ENCODE measurements at regions of chr7 and their contacts with region 1.

Region 1: DNA sequence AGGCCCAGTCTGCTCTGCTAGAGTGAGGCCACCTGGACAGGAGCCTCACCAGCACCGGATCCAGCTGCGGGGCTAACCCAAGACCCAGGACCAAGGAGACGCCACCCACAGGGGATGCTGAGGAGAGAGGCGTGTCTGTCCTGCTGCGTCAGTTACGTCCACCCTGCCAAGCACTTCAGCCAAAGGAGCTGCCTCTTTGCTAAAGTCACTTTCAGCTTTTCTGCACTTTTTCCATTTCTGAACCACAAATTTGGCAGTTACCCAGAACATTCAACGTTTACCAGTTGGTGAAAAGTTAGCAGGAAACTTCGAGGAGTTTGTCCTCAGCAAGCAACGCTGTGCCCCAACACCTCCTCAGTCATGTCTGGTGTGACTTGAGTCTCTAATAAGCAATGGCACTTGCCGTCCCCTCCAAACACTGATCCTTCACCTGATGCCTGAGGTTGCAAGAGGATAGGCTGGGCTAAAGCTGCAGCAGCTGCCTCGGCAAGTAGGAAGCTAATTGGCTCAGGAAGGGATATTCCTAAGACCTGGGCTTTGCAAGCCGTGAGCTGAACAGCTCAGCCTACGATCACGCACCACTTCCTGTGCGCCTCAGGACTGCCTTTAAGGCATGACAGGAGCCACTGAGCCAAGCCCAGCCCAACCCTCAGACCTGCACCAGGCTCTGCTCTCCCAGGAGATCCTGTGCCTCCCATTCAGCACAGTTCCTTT is 40.1 kb downstream of the KCNH2 start:
- DNase-seq: no peak
- H3K4me3 ChIP-seq: peak overlapping the region in 1 of 3 donors; percentile 8
- H3K27ac ChIP-seq: no peak overlapping the region
- H3K4me1 ChIP-seq: peaks cover 0 to 4% of the 10 kb centered on the region in 2 donors
- H3K27me3 ChIP-seq: no peaks in the 10 kb centered on the region
- CTCF ChIP-seq: no peak
- POLR2A ChIP-seq: no peak

Region 2: DNA sequence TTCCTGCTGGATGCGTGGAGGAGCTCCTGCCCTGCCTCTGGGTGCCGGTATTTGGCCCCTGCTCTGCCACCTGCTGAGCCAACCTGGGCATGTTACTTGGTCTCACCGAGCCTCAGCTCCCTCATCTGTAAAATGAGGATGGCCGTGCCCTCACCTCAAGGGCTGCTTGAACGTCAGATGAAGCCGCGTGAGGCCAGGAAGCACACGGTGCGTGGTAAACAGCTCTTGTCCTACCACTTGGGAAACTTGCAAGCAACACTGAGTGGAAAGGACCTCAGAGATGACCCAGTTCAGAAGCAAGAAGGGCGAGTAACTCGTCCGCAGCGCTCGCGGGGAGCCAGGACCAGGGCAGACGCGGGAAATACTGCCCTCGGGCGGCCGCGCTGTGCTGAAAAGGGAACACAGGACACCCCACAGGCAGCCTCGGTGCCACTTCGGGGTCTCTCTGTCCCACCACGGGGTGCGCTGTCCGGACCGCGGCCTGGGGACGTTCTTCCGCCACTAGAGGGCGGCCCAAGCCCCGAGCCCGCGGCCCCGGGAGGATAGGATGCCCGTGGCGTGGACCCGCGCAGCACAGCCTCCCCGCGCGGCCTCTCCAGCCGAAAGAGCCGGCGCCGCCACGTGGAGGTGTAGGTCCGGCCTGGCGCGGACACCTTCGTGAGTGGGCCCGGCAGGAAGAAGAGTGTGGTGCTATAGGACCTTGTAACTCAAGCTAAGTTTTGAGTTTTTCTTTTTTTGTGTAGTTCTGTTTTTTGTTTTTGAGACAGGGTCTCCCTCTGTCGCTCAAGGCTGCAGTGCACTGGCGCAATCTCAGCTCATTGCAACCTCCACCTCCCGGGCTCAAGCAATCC is 844.8 kb after region 1 on chr7:
- intact Hi-C with region 1: loop called (anchors 5 kb)
- DNase-seq: peak; percentile 47 to 63
- H3K4me3 ChIP-seq: peak overlapping the region in 2 of 3 donors; percentile 30 to 59
- H3K27ac ChIP-seq: peak overlapping the region; percentile 50 to 64
- H3K4me1 ChIP-seq: no peaks in the 10 kb centered on the region
- H3K27me3 ChIP-seq: no peaks in the 10 kb centered on the region
- CTCF ChIP-seq: peak; percentile 78 to 93 (median 88)
- POLR2A ChIP-seq: no peak

Region 3: DNA sequence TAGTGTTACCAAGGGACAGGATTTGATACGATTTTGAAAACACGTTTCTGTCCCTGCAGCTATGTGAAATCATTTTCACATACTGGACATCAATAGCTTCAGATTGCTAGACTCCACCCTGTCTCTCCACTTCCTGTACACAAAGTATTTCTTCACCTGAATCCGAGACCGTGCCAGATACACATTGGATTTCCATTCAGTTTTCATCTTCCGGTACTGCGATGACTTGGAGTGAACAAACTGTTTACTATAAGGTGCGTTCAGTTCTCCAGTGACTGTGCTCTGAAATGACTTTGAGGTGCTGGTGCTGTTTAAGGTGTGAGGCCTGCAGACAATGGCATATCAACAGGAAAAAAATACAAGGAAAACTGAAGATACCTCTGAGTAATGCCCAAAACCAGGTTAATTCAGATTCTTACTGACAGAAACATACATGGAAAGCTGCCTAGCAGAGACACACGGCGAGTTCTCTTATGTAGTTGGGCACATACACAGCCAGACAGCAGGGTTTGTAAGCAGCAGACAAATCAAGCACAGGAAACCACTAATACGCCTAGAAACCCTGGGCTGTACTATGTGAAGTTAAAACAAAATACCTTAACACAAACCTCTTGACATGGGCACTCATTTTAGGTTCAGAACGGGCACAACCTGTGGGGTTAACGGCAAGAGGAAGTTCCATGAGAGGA is 1206.7 kb after region 1 on chr7:
- intact Hi-C with region 1: loop called (anchors 5 kb)
- DNase-seq: no peak
- H3K4me3 ChIP-seq: no peak overlapping the region
- H3K27ac ChIP-seq: peak overlapping the region in 1 of 2 donors; percentile 8
- H3K4me1 ChIP-seq: no peaks in the 10 kb centered on the region
- H3K27me3 ChIP-seq: no peaks in the 10 kb centered on the region
- CTCF ChIP-seq: no peak
- POLR2A ChIP-seq: no peak